Cardiac septum (tissue), 1 donor: ENCODE measurements at regions of chr12 and their contacts with region 1.

Region 1: GRCh38 chr12:49866859-49867579 is 24.1 kb upstream of the BCDIN3D start:
- DNase-seq: peak; percentile 88

Region 2: GRCh38 chr12:49945394-49946080 is 78.5 kb after region 1 on chr12:
- intact Hi-C with region 1: loop called (anchors 5 kb)
- DNase-seq: peak; percentile 91